Heart right ventricle (tissue), 16 donors: ENCODE measurements at regions of chr15 and their contacts with region 1.

Region 1: GRCh38 chr15:67542420-67543347 is at the start of gene MAP2K5:
- DNase-seq: peak; percentile 90 to 91
- ATAC-seq: peak; percentile 89 to 98 (median 95)
- H3K4me3 ChIP-seq: peak within 1 kb of the TSS; percentile 56 to 95 (median 84)
- H3K27ac ChIP-seq: peak within 1 kb of the TSS; percentile 81 to 94 (median 90)
- H3K4me1 ChIP-seq: peaks cover 5 to 30% (median 14%) of the 10 kb centered on the region in 9 donors
- H3K27me3 ChIP-seq: no peaks in the 10 kb centered on the region
- CTCF ChIP-seq: peak in 2 of 9 donors; percentile 6 to 15
- total RNA-seq, gene MAP2K5: 14.4 to 34.3 (median 21.4) TPM

Region 2: DNA sequence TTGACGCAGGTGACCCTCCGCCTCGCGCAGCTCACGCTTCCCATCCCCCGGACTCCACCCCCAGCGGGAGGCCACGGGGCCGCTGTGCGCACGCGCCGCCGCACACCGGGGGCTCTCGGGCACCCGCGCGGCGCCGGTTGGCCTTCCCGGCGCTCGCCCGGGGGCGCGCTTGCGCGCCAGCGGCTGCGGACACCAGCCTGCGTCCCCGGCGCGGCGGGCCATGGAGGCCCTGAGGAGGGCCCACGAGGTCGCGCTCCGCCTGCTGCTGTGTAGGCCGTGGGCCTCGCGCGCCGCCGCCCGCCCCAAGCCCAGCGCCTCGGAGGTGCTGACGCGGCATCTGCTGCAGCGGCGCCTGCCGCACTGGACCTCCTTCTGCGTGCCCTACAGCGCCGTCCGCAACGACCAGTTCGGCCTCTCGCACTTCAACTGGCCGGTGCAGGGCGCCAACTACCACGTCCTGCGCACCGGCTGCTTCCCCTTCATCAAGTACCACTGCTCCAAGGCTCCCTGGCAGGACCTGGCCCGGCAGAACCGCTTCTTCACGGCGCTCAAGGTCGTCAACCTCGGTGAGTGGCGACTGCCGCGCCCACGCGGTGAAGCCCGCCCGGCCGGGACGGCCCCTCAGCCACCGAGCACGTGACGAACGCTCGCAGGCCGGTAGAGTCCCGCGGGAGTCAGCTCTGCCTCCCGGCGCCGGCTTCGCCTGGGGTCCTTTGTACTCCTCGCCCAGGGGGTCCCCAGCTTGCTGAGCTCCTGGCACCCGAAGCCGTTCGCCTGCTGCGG is 21.5 kb before region 1 on chr15 and contains the start of gene C15orf61:
- intact Hi-C with region 1: loop called in 5 of 10 experiments (anchors 1 to 2 kb)
- DNase-seq: peak; percentile 82 to 89
- ATAC-seq: peak; percentile 90 to 95 (median 92)
- H3K4me3 ChIP-seq: peak within 1 kb of the TSS; percentile 55 to 82 (median 76)
- H3K27ac ChIP-seq: peak within 1 kb of the TSS; percentile 92 to 99 (median 97)
- H3K4me1 ChIP-seq: peaks cover 0 to 40% (median 29%) of the 10 kb centered on the region in 9 donors
- H3K27me3 ChIP-seq: no peaks in the 10 kb centered on the region
- CTCF ChIP-seq: peak in 3 of 9 donors; percentile 6 to 25 (median 21)
- total RNA-seq, gene C15orf61: 6.9 to 15.0 (median 11.9) TPM

Region 3: GRCh38 chr15:67700023-67700422 is 157.3 kb after region 1 on chr15:
- intact Hi-C with region 1: no loop called
- DNase-seq: no peak
- ATAC-seq: no peak
- H3K4me3 ChIP-seq: no peak overlapping the region
- H3K27ac ChIP-seq: no peak overlapping the region
- H3K4me1 ChIP-seq: no peaks in the 10 kb centered on the region
- H3K27me3 ChIP-seq: no peaks in the 10 kb centered on the region
- CTCF ChIP-seq: no peak